ENCODE measurements at regions of chr17 and their contacts with region 1.

Region 1: GRCh38 chr17:47649153-47649971 is at the start of gene KPNB1:
- DNase-seq: peak; percentile 87 to 100 (median 92)
- ATAC-seq: peak; percentile 91
- H3K4me3 ChIP-seq: peak within 1 kb of the TSS; percentile 86
- H3K27ac ChIP-seq: peak within 1 kb of the TSS; percentile 93
- H3K4me1 ChIP-seq: peaks cover 13 to 30% of the 10 kb centered on the region in 2 experiments
- H3K27me3 ChIP-seq: no peaks in the 10 kb centered on the region
- CTCF ChIP-seq: no peak
- EP300 ChIP-seq: peak; percentile 56
- POLR2A ChIP-seq: peak; percentile 80
- RAD21 ChIP-seq: no peak
- polyA plus RNA-seq, gene KPNB1: 154 to 176 TPM

Region 2: GRCh38 chr17:47239619-47240374 is 409.6 kb before region 1 on chr17:
- CTCF ChIA-PET with region 1: no interaction called
- POLR2A ChIA-PET with region 1: no interaction called
- in situ Hi-C with region 1: no loop called
- intact Hi-C with region 1: no loop called
- DNase-seq: peak in 3 of 4 experiments; percentile 32 to 87 (median 72)
- ATAC-seq: peak; percentile 82
- H3K4me3 ChIP-seq: no peak overlapping the region
- H3K27ac ChIP-seq: peak overlapping the region; percentile 69
- H3K4me1 ChIP-seq: peaks cover 20 to 21% of the 10 kb centered on the region in 2 experiments
- H3K27me3 ChIP-seq: no peaks in the 10 kb centered on the region
- CTCF ChIP-seq: no peak
- EP300 ChIP-seq: peak; percentile 55
- POLR2A ChIP-seq: no peak
- RAD21 ChIP-seq: no peak

Region 3: GRCh38 chr17:47368262-47368661 is 281.1 kb before region 1 on chr17:
- CTCF ChIA-PET with region 1: no interaction called
- POLR2A ChIA-PET with region 1: no interaction called
- in situ Hi-C with region 1: no loop called
- intact Hi-C with region 1: no loop called
- DNase-seq: no peak
- ATAC-seq: no peak
- H3K4me3 ChIP-seq: no peak overlapping the region
- H3K27ac ChIP-seq: no peak overlapping the region
- H3K4me1 ChIP-seq: no peaks in the 10 kb centered on the region
- H3K27me3 ChIP-seq: no peaks in the 10 kb centered on the region
- CTCF ChIP-seq: no peak
- EP300 ChIP-seq: no peak
- POLR2A ChIP-seq: no peak
- RAD21 ChIP-seq: no peak

Region 4: GRCh38 chr17:47633996-47634395 is 15.4 kb before region 1 on chr17:
- CTCF ChIA-PET with region 1: no interaction called
- POLR2A ChIA-PET with region 1: interaction called, 19 read pairs
- in situ Hi-C with region 1: no loop called
- intact Hi-C with region 1: no loop called
- DNase-seq: no peak
- ATAC-seq: no peak
- H3K4me3 ChIP-seq: no peak overlapping the region
- H3K27ac ChIP-seq: no peak overlapping the region
- H3K4me1 ChIP-seq: peaks cover 0 to 7% of the 10 kb centered on the region in 2 experiments; a peak in 3 of 5 replicates
- H3K27me3 ChIP-seq: no peaks in the 10 kb centered on the region
- CTCF ChIP-seq: no peak
- EP300 ChIP-seq: no peak
- POLR2A ChIP-seq: no peak
- RAD21 ChIP-seq: no peak

Region 5: GRCh38 chr17:47663912-47664625 is 14.7 kb after region 1 on chr17:
- CTCF ChIA-PET with region 1: no interaction called
- POLR2A ChIA-PET with region 1: interaction called, 35 read pairs
- in situ Hi-C with region 1: no loop called
- intact Hi-C with region 1: no loop called
- DNase-seq: peak; percentile 39 to 65 (median 50)
- ATAC-seq: peak; percentile 88
- H3K4me3 ChIP-seq: no peak overlapping the region
- H3K27ac ChIP-seq: no peak overlapping the region
- H3K4me1 ChIP-seq: no peaks in the 10 kb centered on the region
- H3K27me3 ChIP-seq: no peaks in the 10 kb centered on the region
- CTCF ChIP-seq: peak; percentile 62 to 72 (median 70)
- EP300 ChIP-seq: no peak
- POLR2A ChIP-seq: no peak; the same call in 1 of the 2 replicates
- RAD21 ChIP-seq: peak; percentile 50 to 68

Region 6: DNA sequence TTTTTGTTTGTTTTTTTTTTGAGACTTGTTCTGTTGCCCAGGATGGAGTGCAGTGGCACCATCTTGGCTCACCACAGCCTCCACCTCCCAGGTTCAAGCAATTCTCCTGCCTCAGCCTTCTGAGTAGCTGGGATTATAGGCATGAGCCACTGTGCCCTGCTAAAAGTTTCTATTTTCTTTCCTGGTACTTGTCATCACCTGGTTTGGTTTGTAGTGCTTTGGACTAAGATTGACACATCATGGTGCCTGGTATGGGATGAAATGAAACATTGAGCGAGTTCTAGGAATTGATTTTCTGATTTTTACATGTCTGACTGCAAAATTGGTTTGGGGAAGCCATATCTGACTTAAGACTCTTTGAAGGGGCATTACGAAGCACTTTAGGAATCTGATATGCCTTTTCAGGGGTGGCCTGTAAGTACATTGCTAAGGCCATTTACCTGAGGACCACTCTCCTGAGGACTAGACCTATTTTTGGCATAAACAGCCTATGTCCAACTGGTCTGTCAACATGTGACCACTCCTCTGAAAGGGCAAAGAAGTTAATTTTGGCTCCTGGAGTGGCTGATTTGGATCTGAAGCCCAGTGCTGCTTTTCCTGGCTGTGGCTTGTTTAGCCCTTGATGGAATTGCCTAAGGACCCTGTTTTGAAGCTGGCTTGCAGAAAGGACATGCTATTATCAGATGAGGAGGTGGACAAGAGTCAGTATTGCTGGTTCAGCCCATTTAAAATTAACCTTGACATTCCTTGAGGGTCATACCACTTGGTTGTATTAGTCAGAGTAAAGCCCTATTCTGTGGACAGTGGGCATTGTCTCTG is 26.2 kb after region 1 on chr17:
- CTCF ChIA-PET with region 1: no interaction called
- POLR2A ChIA-PET with region 1: interaction called, 10 read pairs
- in situ Hi-C with region 1: no loop called
- intact Hi-C with region 1: no loop called
- DNase-seq: no peak
- ATAC-seq: no peak
- H3K4me3 ChIP-seq: no peak overlapping the region
- H3K27ac ChIP-seq: no peak overlapping the region
- H3K4me1 ChIP-seq: no peaks in the 10 kb centered on the region
- H3K27me3 ChIP-seq: no peaks in the 10 kb centered on the region
- CTCF ChIP-seq: no peak
- EP300 ChIP-seq: no peak
- POLR2A ChIP-seq: no peak
- RAD21 ChIP-seq: no peak

Measured in K562 (cell line).